ENCODE measurements at regions of chr7 and their contacts with region 1.

Region 1: GRCh38 chr7:113159746-113160339 is 41.5 kb upstream of the SMIM30 start:
- DNase-seq: peak; percentile 16 to 23
- ATAC-seq: peak in 1 of 2 experiments; percentile 83; a peak in 4 of 6 replicates
- H3K4me3 ChIP-seq: no peak overlapping the region
- H3K27ac ChIP-seq: no peak overlapping the region
- H3K4me1 ChIP-seq: no peaks in the 10 kb centered on the region
- CTCF ChIP-seq: peak; percentile 54
- EP300 ChIP-seq: no peak
- POLR2A ChIP-seq: no peak
- RAD21 ChIP-seq: peak; percentile 42 to 51; a peak in 4 of 5 replicates

Region 2: GRCh38 chr7:113421696-113422330 is 262.0 kb after region 1 on chr7:
- CTCF ChIA-PET with region 1: interaction called, 12 read pairs
- POLR2A ChIA-PET with region 1: no interaction called
- DNase-seq: peak; percentile 50 to 84
- ATAC-seq: peak; percentile 97 to 100
- H3K4me3 ChIP-seq: no peak overlapping the region
- H3K27ac ChIP-seq: no peak overlapping the region
- H3K4me1 ChIP-seq: no peaks in the 10 kb centered on the region
- CTCF ChIP-seq: peak; percentile 79
- EP300 ChIP-seq: no peak
- POLR2A ChIP-seq: no peak
- RAD21 ChIP-seq: peak; percentile 76 to 77

Measured in A549 (cell line).